Activated CD4-positive, alpha-beta T cell treated with anti-CD3 and anti-CD28 coated beads, Interleukin-2, amount 10 ng/mL, durations not matched to agents 24 days and 14 days (primary cell): ENCODE measurements at regions of chr1 and their contacts with region 1.

Region 1: DNA sequence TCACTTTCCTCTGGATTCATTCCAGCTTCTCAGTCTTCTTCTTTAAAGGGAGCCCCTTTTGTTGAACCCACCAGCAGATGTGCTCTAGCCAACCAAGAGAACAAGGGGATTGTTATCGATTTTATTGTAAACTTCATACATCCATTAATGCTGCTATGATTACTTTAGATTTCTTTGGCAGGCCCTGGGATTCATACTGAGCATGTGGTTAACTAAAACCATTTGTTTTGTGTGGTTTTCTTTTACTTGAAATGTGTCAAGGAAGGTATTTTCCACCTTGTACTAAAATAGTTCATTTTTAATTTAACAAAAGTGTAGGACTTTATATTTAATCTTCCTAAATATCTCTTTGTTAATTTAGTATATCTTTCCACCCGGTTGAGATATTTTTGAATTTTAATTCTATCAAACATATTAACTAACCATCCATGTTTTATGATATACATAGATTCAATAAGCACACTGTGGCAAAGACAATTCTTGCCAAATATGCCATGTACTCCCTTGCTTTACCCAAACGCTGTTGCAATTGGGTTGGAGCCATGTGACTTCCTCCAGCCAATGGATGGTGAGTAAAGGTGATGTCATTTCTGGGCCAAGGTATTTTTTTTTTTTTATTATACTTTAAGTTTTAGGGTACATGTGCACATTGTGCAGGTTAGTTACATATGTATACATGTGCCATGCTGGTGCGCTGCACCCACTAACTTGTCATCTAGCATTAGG is 74.2 kb upstream of the LRRC8D start:
- DNase-seq: no peak
- H3K4me3 Mint-ChIP-seq: peak overlapping the region; percentile 57
- H3K27ac Mint-ChIP-seq: peak overlapping the region; percentile 86
- H3K4me1 Mint-ChIP-seq: peaks cover 22% of the 10 kb centered on the region
- H3K27me3 Mint-ChIP-seq: no peaks in the 10 kb centered on the region

Region 2: DNA sequence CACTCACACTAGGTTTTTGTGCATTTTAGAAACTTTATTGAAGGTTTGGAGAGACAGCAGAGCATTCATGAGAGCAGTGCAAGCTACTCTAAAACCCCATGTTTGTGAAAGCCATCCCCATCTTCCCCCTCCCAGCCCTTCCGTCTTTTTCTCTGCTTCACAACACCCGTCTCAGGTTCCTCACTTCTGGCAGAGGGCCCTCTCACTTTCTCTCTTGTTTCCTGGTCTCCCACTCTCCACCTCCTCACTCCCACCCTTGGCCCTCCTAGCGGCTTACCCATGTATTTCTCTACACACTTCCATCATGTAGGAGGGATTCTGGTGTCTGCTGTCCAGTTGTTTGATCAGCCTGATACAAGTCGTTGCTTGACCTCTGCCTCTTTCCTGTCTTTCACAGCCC is 21.0 kb before region 1 on chr1:
- intact Hi-C with region 1: loop called (anchors 2 kb)
- DNase-seq: no peak
- H3K4me3 Mint-ChIP-seq: peak overlapping the region; percentile 50
- H3K27ac Mint-ChIP-seq: peak overlapping the region; percentile 100
- H3K4me1 Mint-ChIP-seq: peaks cover 72% of the 10 kb centered on the region
- H3K27me3 Mint-ChIP-seq: no peaks in the 10 kb centered on the region